Activated CD8-positive, alpha-beta T cell treated with anti-CD3 and anti-CD28 coated beads for 36 hours (primary cell): ENCODE measurements at regions of chr2 and their contacts with region 1.

Region 1: GRCh38 chr2:23824777-23825212 is 102.1 kb downstream of the ATAD2B start:
- DNase-seq: peak; percentile 22
- ATAC-seq: peak; percentile 61
- H3K4me3 Mint-ChIP-seq: no peak overlapping the region
- H3K27ac Mint-ChIP-seq: no peak overlapping the region
- H3K4me1 Mint-ChIP-seq: peaks cover 15% of the 10 kb centered on the region
- H3K27me3 Mint-ChIP-seq: no peaks in the 10 kb centered on the region
- CTCF ChIP-seq: peak; percentile 85

Region 2: DNA sequence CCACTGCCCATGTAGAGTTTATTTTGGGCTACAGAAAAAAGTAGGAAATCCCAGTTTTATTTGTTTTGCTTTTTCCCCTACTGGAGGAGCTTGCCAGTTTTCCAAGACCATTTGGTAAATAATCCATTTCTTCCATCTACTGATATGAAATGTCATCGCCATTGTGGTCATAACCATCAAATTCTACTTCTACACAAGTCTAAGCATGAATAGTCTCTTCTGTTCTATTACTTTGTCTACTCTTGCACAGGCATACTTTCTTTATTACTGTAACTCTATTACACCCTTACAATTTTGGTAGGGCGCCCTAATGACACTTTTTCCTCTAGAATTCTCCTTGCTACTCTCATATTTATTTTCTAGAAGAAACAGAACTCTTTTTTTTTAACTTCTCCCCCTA is 18.6 kb before region 1 on chr2:
- CTCF ChIA-PET with region 1: interaction called, 11 read pairs
- POLR2A ChIA-PET with region 1: interaction called, 6 read pairs
- intact Hi-C with region 1: no loop called
- DNase-seq: no peak
- ATAC-seq: no peak
- H3K4me3 Mint-ChIP-seq: no peak overlapping the region
- H3K27ac Mint-ChIP-seq: peak overlapping the region; percentile 6
- H3K4me1 Mint-ChIP-seq: no peaks in the 10 kb centered on the region
- H3K27me3 Mint-ChIP-seq: no peaks in the 10 kb centered on the region
- CTCF ChIP-seq: no peak

Region 3: DNA sequence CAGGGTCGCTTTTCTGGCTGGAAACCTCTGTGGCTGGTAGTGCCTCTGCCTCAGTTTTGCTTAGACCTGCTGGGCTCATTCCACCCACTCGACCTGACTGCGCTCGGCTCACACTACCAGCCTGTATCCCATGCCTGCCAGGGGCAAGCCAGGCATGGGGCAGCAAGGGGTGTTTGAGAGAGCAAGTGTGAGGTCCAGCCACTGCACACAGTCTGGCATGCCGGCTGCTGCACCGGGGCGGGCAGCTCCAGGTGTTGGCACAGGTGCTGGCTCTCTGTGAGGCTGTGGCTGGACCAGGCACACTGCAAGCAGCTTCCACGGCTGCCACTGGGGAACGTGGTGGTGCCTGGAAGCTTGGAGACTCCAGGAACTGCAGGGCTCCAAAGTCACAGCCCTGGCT is 11.2 kb after region 1 on chr2:
- CTCF ChIA-PET with region 1: interaction called, 26 read pairs
- POLR2A ChIA-PET with region 1: no interaction called
- intact Hi-C with region 1: no loop called
- DNase-seq: no peak
- ATAC-seq: no peak
- H3K4me3 Mint-ChIP-seq: no peak overlapping the region
- H3K27ac Mint-ChIP-seq: no peak overlapping the region
- H3K4me1 Mint-ChIP-seq: no peaks in the 10 kb centered on the region
- H3K27me3 Mint-ChIP-seq: no peaks in the 10 kb centered on the region
- CTCF ChIP-seq: no peak

Region 4: DNA sequence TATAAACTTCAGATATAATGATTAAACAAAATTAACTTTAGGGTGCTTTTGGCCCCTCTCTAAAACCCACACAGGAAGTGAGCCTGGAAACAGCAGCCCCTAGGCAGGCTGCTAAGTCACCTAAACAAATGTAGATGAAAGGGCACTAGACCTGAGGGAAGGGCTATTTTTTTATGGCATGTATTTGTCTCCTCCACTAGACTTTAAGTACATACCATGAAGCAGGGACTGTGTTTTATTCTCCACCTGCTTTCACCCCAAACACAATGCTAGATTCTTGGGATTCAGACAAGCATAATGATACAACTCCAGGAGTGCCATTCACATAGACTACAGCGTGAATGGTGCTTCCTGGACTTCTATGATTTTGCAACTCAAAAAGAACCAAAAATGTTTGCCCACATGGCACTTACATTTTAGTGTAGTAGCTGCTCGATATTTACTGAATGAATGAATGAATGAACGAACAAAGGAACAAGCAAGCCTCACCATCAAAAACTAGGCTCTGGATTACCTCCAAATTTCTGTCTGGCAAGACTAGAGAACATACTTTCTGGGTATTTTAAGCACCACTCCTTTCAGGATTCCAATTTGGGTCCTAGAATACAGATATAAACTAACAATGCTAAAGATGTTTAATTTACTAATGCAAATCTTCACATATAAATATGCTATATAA is 92.1 kb after region 1 on chr2:
- CTCF ChIA-PET with region 1: interaction called, 5 read pairs
- POLR2A ChIA-PET with region 1: no interaction called
- intact Hi-C with region 1: loop called (anchors 10 kb)
- DNase-seq: peak; percentile 53
- ATAC-seq: peak; percentile 85
- H3K4me3 Mint-ChIP-seq: no peak overlapping the region
- H3K27ac Mint-ChIP-seq: peak overlapping the region; percentile 73
- H3K4me1 Mint-ChIP-seq: peaks cover 50% of the 10 kb centered on the region
- H3K27me3 Mint-ChIP-seq: no peaks in the 10 kb centered on the region
- CTCF ChIP-seq: no peak

Region 5: GRCh38 chr2:24075915-24076848 is 251.4 kb after region 1 on chr2 and contains the start of gene SF3B6:
- CTCF ChIA-PET with region 1: interaction called, 27 read pairs
- POLR2A ChIA-PET with region 1: no interaction called
- intact Hi-C with region 1: loop called (anchors 5 kb)
- DNase-seq: peak; percentile 100
- ATAC-seq: peak; percentile 92
- H3K4me3 Mint-ChIP-seq: peak within 1 kb of the TSS; percentile 93
- H3K27ac Mint-ChIP-seq: peak within 1 kb of the TSS; percentile 98
- H3K4me1 Mint-ChIP-seq: peaks cover 36% of the 10 kb centered on the region
- H3K27me3 Mint-ChIP-seq: no peaks in the 10 kb centered on the region
- CTCF ChIP-seq: no peak
- total RNA-seq, gene SF3B6: 141 to 144 TPM

Region 6: GRCh38 chr2:24084386-24085361 is 259.9 kb after region 1 on chr2 and contains the start of gene TP53I3:
- CTCF ChIA-PET with region 1: interaction called, 76 read pairs
- POLR2A ChIA-PET with region 1: no interaction called
- intact Hi-C with region 1: loop called (anchors 5 kb)
- DNase-seq: peak; percentile 85
- ATAC-seq: peak; percentile 90
- H3K4me3 Mint-ChIP-seq: peak within 1 kb of the TSS; percentile 84
- H3K27ac Mint-ChIP-seq: peak within 1 kb of the TSS; percentile 79
- H3K4me1 Mint-ChIP-seq: peaks cover 12% of the 10 kb centered on the region
- H3K27me3 Mint-ChIP-seq: no peaks in the 10 kb centered on the region
- CTCF ChIP-seq: peak; percentile 97
- total RNA-seq, gene TP53I3: 1.8 to 2.6 TPM

Region 7: GRCh38 chr2:24164125-24164973 is 339.6 kb after region 1 on chr2:
- CTCF ChIA-PET with region 1: interaction called, 21 read pairs
- POLR2A ChIA-PET with region 1: no interaction called
- intact Hi-C with region 1: no loop called
- DNase-seq: peak; percentile 70
- ATAC-seq: peak; percentile 91
- H3K4me3 Mint-ChIP-seq: no peak overlapping the region
- H3K27ac Mint-ChIP-seq: no peak overlapping the region
- H3K4me1 Mint-ChIP-seq: no peaks in the 10 kb centered on the region
- H3K27me3 Mint-ChIP-seq: no peaks in the 10 kb centered on the region
- CTCF ChIP-seq: peak; percentile 91